ENCODE measurements at regions of chr12 and their contacts with region 1.

Region 1: GRCh38 chr12:459430-460258 is at the start of gene B4GALNT3:
- DNase-seq: no peak
- ATAC-seq: peak; percentile 47
- H3K4me3 ChIP-seq: peak within 1 kb of the TSS; percentile 60; the same call in 1 of the 2 replicates
- H3K27ac ChIP-seq: no peak within 1 kb of the TSS
- H3K4me1 ChIP-seq: no peaks in the 10 kb centered on the region
- H3K27me3 ChIP-seq: peaks cover 0 to 16% of the 10 kb centered on the region in 2 experiments
- CTCF ChIP-seq: no peak
- EP300 ChIP-seq: no peak
- POLR2A ChIP-seq: no peak
- RAD21 ChIP-seq: no peak
- polyA plus RNA-seq, gene B4GALNT3: 0.05 to 0.26 TPM

Region 2: DNA sequence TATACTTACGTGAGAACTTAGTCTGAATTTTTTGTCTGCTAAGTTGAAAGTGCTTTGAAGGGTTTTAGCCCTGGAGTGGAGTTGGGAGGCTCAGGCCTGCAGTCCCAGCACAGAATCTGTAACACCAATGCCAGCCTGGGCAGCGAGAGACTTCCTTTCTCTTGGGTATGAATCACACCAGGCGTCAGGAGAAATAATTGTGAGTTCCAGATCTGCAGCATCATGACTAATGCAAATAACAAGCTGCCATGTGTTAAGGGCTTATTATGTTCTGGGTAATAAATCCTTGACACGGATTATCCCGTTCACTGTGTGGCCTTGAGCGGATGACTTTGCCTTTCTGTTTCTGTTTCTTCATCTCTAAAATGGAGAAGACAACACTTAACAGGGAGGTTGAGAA is 70.7 kb after region 1 on chr12:
- CTCF ChIA-PET with region 1: interaction called, 5 read pairs
- POLR2A ChIA-PET with region 1: no interaction called
- RAD21 ChIA-PET with region 1: no interaction called
- SMC1A ChIA-PET with region 1: no interaction called
- in situ Hi-C with region 1: no loop called
- intact Hi-C with region 1: loop called (anchors 5 kb)
- DNase-seq: no peak
- ATAC-seq: no peak
- H3K4me3 ChIP-seq: no peak overlapping the region
- H3K27ac ChIP-seq: no peak overlapping the region
- H3K4me1 ChIP-seq: no peaks in the 10 kb centered on the region
- H3K27me3 ChIP-seq: peaks cover 0 to 1% of the 10 kb centered on the region in 2 experiments; a peak in 2 of 4 replicates
- CTCF ChIP-seq: no peak
- EP300 ChIP-seq: no peak
- POLR2A ChIP-seq: no peak
- RAD21 ChIP-seq: no peak

Region 3: DNA sequence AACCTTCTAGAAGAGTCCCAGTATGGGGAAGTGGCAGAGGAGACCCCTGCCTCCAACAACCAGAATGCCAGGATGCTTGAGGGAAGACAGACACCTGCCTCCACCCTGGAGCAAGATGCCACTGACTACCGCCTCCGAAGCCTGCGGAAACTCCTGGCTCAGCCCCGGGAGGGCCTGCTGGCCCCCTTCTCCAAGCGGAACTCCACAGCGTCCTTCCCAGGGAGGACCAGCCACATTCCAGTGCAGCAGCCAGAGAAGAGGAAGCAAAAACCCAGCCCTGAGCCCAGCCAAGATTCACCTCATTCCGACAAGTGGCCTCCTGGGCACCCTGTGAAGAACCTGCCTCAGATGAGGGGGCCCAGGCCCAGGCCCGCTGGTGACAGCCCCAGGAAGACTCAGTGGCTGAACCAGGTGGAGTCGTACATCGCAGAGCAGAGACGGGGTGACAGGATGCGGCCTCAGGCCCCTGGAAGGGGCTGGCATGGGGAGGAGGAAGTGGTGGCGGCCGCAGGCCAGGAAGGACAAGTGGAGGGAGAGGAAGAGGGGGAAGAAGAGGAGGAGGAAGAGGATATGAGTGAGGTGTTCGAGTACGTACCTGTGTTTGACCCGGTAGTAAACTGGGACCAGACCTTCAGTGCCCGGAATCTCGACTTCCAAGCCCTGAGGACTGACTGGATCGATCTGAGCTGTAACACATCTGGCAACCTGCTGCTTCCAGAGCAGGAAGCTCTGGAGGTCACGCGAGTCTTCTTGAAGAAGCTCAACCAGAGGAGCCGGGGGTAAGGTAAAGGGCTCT is 93.8 kb after region 1 on chr12:
- CTCF ChIA-PET with region 1: interaction called, 45 read pairs
- POLR2A ChIA-PET with region 1: no interaction called
- RAD21 ChIA-PET with region 1: interaction called, 3 read pairs
- SMC1A ChIA-PET with region 1: no interaction called
- in situ Hi-C with region 1: loop called (anchors 5 kb)
- intact Hi-C with region 1: no loop called
- DNase-seq: no peak
- ATAC-seq: peak; percentile 25
- H3K4me3 ChIP-seq: peak overlapping the region; percentile 48; the same call in 1 of the 2 replicates
- H3K27ac ChIP-seq: 0 out of 2 replicates have a peak overlapping the region, but pooled peaks have one; percentile 1
- H3K4me1 ChIP-seq: no peaks in the 10 kb centered on the region
- H3K27me3 ChIP-seq: peaks cover 0 to 3% of the 10 kb centered on the region in 2 experiments; a peak in 1 of 4 replicates
- CTCF ChIP-seq: no peak
- EP300 ChIP-seq: no peak
- POLR2A ChIP-seq: peak; percentile 44; the same call in 1 of the 2 replicates
- RAD21 ChIP-seq: no peak

Measured in GM12878 (cell line).